Activated CD4-positive, alpha-beta memory T cell treated with anti-CD3 and anti-CD28 coated beads for 36 hours (primary cell): ENCODE measurements at regions of chr1 and their contacts with region 1.

Region 1: GRCh38 chr1:9629445-9630201 is 21.9 kb upstream of the PIK3CD start:
- DNase-seq: peak; percentile 90
- H3K4me3 Mint-ChIP-seq: peak overlapping the region; percentile 87
- H3K27ac Mint-ChIP-seq: peak overlapping the region; percentile 97
- H3K4me1 Mint-ChIP-seq: peaks cover 59% of the 10 kb centered on the region
- H3K27me3 Mint-ChIP-seq: no peaks in the 10 kb centered on the region

Region 2: GRCh38 chr1:9455487-9456234 is 174.0 kb before region 1 on chr1:
- CTCF ChIA-PET with region 1: no interaction called
- POLR2A ChIA-PET with region 1: no interaction called
- intact Hi-C with region 1: no loop called
- DNase-seq: peak; percentile 74
- H3K4me3 Mint-ChIP-seq: no peak overlapping the region
- H3K27ac Mint-ChIP-seq: no peak overlapping the region
- H3K4me1 Mint-ChIP-seq: no peaks in the 10 kb centered on the region
- H3K27me3 Mint-ChIP-seq: no peaks in the 10 kb centered on the region

Region 3: DNA sequence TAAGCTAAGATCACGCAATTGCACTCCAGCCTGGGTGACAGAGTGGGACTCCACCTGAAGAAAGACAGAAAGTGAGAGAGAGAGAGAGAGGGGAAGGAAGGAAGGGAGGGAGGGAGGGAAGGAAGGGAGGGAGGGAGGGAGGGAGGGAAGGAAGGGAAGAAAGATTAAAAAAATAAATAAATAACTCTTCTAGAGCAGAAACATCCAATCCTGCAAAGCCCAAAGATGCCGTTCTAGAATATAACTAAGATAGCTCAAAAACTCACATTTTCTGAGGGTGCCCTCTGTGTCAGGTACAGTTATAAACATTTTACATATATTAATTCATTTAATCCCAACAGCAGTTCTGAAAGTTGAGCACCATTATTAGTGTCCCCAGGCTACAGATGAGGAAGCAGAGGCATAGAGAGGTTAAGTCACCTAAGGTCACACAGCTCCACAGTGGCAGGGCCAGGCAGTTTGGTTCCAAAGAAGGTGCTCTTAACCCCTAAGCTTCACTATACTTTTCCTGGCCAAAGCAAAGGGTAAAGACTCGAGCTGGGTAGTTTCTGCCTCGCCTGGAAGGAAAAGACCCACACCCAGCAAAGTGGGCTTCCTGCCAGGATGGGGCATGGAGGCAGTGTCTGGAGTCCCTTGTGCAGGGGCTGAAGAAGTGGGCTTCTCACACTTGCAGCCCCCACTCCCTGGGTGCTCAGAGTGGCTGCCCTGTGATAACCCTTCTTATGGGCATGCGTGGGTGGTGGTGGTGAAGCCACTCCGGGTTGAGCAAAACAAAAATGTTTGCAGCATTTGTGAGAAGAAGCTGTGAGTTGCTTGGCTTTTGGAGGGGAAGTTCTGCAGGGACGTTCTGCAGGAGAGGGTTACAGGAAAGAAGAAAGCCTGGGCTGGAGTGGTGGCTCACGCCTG is 14.0 kb after region 1 on chr1:
- CTCF ChIA-PET with region 1: interaction called, 20 read pairs
- POLR2A ChIA-PET with region 1: interaction called, 13 read pairs
- intact Hi-C with region 1: no loop called
- DNase-seq: peak; percentile 44
- H3K4me3 Mint-ChIP-seq: no peak overlapping the region
- H3K27ac Mint-ChIP-seq: peak overlapping the region; percentile 65
- H3K4me1 Mint-ChIP-seq: peaks cover 47% of the 10 kb centered on the region
- H3K27me3 Mint-ChIP-seq: no peaks in the 10 kb centered on the region

Region 4: GRCh38 chr1:9671377-9672140 is 41.9 kb after region 1 on chr1:
- CTCF ChIA-PET with region 1: interaction called, 12 read pairs
- POLR2A ChIA-PET with region 1: interaction called, 4 read pairs
- intact Hi-C with region 1: loop called (anchors 1 kb)
- DNase-seq: peak; percentile 56
- H3K4me3 Mint-ChIP-seq: peak overlapping the region; percentile 28
- H3K27ac Mint-ChIP-seq: peak overlapping the region; percentile 92
- H3K4me1 Mint-ChIP-seq: peaks cover 58% of the 10 kb centered on the region
- H3K27me3 Mint-ChIP-seq: no peaks in the 10 kb centered on the region

Region 5: GRCh38 chr1:9717193-9718005 is 87.8 kb after region 1 on chr1:
- CTCF ChIA-PET with region 1: interaction called, 74 read pairs
- POLR2A ChIA-PET with region 1: interaction called, 27 read pairs
- intact Hi-C with region 1: loop called (anchors 2 kb)
- DNase-seq: peak; percentile 95
- H3K4me3 Mint-ChIP-seq: peak overlapping the region; percentile 87
- H3K27ac Mint-ChIP-seq: peak overlapping the region; percentile 94
- H3K4me1 Mint-ChIP-seq: peaks cover 61% of the 10 kb centered on the region
- H3K27me3 Mint-ChIP-seq: no peaks in the 10 kb centered on the region

Region 6: DNA sequence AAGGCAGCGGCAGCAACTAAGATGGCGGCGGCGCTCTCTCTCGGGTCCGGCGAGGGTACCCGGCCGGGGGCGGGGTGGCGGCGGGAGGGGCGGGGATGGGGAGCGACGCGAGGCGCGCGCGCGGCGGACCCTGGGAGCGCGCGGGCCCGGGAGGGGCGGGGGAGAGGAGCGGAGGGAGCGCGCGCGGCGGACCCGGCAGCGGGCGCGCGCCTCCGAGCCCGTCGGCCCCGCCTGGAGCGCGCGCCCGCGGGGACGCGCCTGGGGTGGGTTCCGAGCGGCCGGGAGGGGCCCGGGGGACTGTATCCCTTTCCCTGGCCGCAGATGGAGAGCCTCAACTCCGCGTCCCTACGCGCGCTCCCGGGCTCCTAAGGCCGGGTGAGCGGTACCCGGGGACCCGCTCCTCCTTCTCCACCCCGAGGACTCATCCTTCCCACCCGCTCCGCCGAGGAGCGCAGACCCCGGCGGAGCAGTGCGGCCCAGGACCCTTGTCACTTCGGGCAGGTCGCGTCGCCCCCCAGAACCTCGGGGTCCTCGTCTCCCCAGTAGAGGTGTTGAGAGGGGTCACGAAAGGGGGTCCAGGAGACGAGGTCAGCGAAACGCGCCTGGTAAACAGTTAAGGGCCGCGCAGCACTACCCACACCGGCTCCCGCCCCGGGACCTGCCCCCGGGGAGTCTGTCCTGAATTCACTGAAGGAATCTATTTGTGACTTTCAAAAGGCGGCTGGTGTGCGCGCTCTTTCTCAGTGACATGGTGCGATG is 194.5 kb after region 1 on chr1 and contains the start of gene CLSTN1:
- CTCF ChIA-PET with region 1: interaction called, 4 read pairs
- POLR2A ChIA-PET with region 1: no interaction called
- intact Hi-C with region 1: loop called (anchors 2 kb)
- DNase-seq: peak; percentile 93
- H3K4me3 Mint-ChIP-seq: peak within 1 kb of the TSS; percentile 94
- H3K27ac Mint-ChIP-seq: peak within 1 kb of the TSS; percentile 77
- H3K4me1 Mint-ChIP-seq: peaks cover 46% of the 10 kb centered on the region
- H3K27me3 Mint-ChIP-seq: no peaks in the 10 kb centered on the region
- total RNA-seq, gene CLSTN1: 33.6 to 34.1 TPM

Region 7: DNA sequence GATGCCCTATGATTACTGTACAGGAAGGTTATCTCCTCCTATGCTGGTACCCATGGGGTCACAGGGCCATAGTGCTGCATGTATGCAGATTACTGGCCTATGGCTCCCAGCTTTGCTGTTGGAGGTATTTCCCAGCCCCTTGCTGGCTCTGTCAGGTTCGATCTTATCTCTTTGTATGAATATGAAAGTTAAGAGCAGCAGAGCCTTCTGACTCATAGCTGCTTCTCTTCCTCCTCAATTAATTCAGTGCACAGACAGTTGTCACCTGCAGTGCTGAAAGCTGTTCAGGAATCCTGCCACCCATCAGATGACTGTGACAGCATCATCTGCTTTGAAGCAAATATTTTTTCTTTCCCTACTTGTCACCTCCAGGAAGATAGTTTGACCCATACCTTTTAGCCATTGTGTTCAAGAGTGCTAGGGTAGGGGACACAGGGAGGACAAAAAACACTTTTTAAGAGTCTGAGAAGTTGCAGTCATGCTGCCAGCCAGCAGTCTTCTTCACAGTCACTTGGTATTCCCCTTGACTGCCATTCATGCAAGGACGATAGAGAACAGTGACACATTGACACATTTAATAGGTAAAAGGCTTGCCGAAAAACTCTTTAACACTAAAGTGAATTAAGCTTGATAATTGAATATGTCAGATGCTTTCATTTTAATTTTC is 653.8 kb after region 1 on chr1:
- CTCF ChIA-PET with region 1: no interaction called
- POLR2A ChIA-PET with region 1: no interaction called
- intact Hi-C with region 1: loop called (anchors 2 kb)
- DNase-seq: peak; percentile 63
- H3K4me3 Mint-ChIP-seq: no peak overlapping the region
- H3K27ac Mint-ChIP-seq: peak overlapping the region; percentile 57
- H3K4me1 Mint-ChIP-seq: peaks cover 32% of the 10 kb centered on the region
- H3K27me3 Mint-ChIP-seq: no peaks in the 10 kb centered on the region